ENCODE measurements at regions of chr6 and their contacts with region 1.

Region 1: DNA sequence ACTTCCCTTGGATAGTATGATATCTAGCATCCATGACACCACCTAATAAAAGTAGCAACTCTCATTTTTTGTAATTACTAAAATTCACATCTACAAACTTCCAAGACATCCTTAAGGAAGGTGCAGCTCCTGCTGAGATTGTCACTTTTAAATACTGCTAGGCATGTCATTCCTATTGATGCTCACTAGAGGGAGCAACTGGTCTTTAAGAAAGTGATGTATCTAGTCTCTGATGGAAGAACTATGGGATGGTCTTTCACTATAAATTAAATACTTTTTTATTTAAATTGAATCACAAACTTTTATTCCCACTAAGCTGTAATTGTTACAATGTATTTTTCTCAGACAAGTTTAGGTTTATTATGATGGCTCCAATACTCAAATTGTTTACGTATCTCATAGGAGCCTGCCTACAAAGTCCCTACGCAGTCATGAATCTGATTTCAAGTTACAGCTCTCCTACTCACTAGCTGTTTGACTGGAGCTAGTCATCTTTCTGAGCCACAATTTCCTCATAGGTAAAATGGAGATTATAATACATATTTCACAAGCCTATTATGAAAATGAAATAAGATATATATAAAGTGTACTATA is 8.1 kb upstream of the TSPYL1 start:
- DNase-seq: peak in 6 of 9 donors; percentile 19 to 51 (median 41)
- ATAC-seq: peak; percentile 91
- H3K4me3 ChIP-seq: no peak overlapping the region
- H3K4me3 Mint-ChIP-seq: no peak overlapping the region
- H3K27ac ChIP-seq: no peak overlapping the region
- H3K27ac Mint-ChIP-seq: no peak overlapping the region
- H3K4me1 ChIP-seq: no peaks in the 10 kb centered on the region
- H3K4me1 Mint-ChIP-seq: peaks cover 0 to 3% (median 0%) of the 10 kb centered on the region in 7 donors
- H3K27me3 ChIP-seq: peaks cover 0 to 2% of the 10 kb centered on the region in 2 donors
- H3K27me3 Mint-ChIP-seq: peaks cover 0 to 10% (median 0%) of the 10 kb centered on the region in 5 donors

Region 2: GRCh38 chr6:116217069-116217468 is 70.7 kb before region 1 on chr6:
- CTCF ChIA-PET with region 1: no interaction called
- POLR2A ChIA-PET with region 1: no interaction called
- intact Hi-C with region 1: loop called in 1 of 2 experiments (anchors 2 kb)
- DNase-seq: peak in 6 of 9 donors; percentile 10 to 55 (median 44)
- ATAC-seq: peak; percentile 86
- H3K4me3 ChIP-seq: no peak overlapping the region
- H3K4me3 Mint-ChIP-seq: no peak overlapping the region
- H3K27ac ChIP-seq: no peak overlapping the region
- H3K27ac Mint-ChIP-seq: peak overlapping the region in 5 of 9 donors; percentile 7 to 76 (median 44)
- H3K4me1 ChIP-seq: no peaks in the 10 kb centered on the region
- H3K4me1 Mint-ChIP-seq: peaks cover 0 to 12% (median 6%) of the 10 kb centered on the region in 7 donors
- H3K27me3 ChIP-seq: no peaks in the 10 kb centered on the region
- H3K27me3 Mint-ChIP-seq: no peaks in the 10 kb centered on the region

Region 3: GRCh38 chr6:116268589-116269293 is 19.0 kb before region 1 on chr6:
- CTCF ChIA-PET with region 1: interaction called, 35 read pairs
- POLR2A ChIA-PET with region 1: interaction called, 3 read pairs
- intact Hi-C with region 1: loop called in 1 of 2 experiments (anchors 1 kb)
- DNase-seq: peak in 7 of 9 donors; percentile 21 to 54 (median 49)
- ATAC-seq: peak; percentile 93
- H3K4me3 ChIP-seq: no peak overlapping the region
- H3K4me3 Mint-ChIP-seq: no peak overlapping the region
- H3K27ac ChIP-seq: peak overlapping the region; percentile 6
- H3K27ac Mint-ChIP-seq: peak overlapping the region in 7 of 9 donors; percentile 1 to 60 (median 23)
- H3K4me1 ChIP-seq: no peaks in the 10 kb centered on the region
- H3K4me1 Mint-ChIP-seq: peaks cover 8 to 56% (median 49%) of the 10 kb centered on the region in 7 donors
- H3K27me3 ChIP-seq: no peaks in the 10 kb centered on the region
- H3K27me3 Mint-ChIP-seq: no peaks in the 10 kb centered on the region

Region 4: DNA sequence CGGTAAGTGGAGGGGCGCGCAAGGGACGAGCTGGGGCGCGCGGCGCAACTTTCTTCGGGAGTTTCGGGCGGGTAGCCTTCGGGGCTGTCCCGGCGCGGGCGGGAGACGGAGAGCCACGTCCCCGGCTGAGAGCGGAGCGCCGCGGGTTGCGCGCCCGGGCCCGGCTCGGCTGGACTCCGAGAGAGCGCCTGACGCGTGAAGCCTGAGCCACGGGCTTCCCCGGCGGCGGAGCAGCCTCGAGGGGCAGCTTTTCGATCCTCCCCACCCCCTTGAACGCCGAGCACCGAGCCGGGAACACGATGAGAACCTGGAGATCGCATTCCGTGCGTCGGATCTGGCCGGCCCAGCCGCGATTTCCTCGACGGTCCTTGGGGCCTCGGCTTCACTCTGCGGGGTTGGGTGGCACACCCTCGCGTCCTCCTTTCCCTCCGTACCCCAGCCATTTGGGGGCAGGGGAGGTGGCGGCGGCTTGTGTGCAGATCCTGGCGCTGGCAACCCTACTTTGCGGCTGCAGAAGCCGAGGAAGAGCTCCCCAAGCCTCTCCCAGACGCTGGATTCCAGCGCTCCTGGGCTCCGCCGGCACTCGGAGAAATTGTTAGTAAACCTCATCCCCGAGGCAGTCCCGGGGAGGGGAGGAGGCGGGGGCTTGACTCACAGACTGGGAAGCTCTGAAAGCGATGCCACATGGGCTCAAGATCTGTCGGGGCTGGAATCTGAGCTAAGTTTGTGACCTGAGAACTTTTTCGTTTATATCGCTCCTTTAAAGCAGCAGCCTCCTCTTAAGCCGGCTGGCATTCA is 83.5 kb after region 1 on chr6:
- CTCF ChIA-PET with region 1: no interaction called
- POLR2A ChIA-PET with region 1: no interaction called
- intact Hi-C with region 1: loop called in 1 of 2 experiments (anchors 5 kb)
- DNase-seq: peak in 8 of 9 donors; percentile 1 to 49 (median 27)
- ATAC-seq: peak; percentile 59
- H3K4me3 ChIP-seq: peak overlapping the region; percentile 64
- H3K4me3 Mint-ChIP-seq: peak overlapping the region; percentile 76 to 93 (median 86)
- H3K27ac ChIP-seq: no peak overlapping the region
- H3K27ac Mint-ChIP-seq: no peak overlapping the region
- H3K4me1 ChIP-seq: peaks cover 9 to 10% of the 10 kb centered on the region in 2 donors
- H3K4me1 Mint-ChIP-seq: peaks cover 9 to 18% (median 11%) of the 10 kb centered on the region in 7 donors
- H3K27me3 ChIP-seq: no peaks in the 10 kb centered on the region
- H3K27me3 Mint-ChIP-seq: peaks cover 5 to 71% (median 23%) of the 10 kb centered on the region in 5 donors

Region 5: GRCh38 chr6:116444092-116444491 is 156.3 kb after region 1 on chr6:
- CTCF ChIA-PET with region 1: no interaction called
- POLR2A ChIA-PET with region 1: no interaction called
- intact Hi-C with region 1: loop called in 1 of 2 experiments (anchors 2 kb)
- DNase-seq: peak in 3 of 9 donors; percentile 7 to 27 (median 20)
- ATAC-seq: peak; percentile 76
- H3K4me3 ChIP-seq: no peak overlapping the region
- H3K4me3 Mint-ChIP-seq: peak overlapping the region in 1 of 10 donors; percentile 36
- H3K27ac ChIP-seq: no peak overlapping the region
- H3K27ac Mint-ChIP-seq: peak overlapping the region in 1 of 9 donors; percentile 25
- H3K4me1 ChIP-seq: peaks cover 0 to 4% of the 10 kb centered on the region in 2 donors
- H3K4me1 Mint-ChIP-seq: peaks cover 0 to 32% (median 0%) of the 10 kb centered on the region in 7 donors
- H3K27me3 ChIP-seq: no peaks in the 10 kb centered on the region
- H3K27me3 Mint-ChIP-seq: peaks cover 8 to 28% (median 20%) of the 10 kb centered on the region in 5 donors

Region 6: DNA sequence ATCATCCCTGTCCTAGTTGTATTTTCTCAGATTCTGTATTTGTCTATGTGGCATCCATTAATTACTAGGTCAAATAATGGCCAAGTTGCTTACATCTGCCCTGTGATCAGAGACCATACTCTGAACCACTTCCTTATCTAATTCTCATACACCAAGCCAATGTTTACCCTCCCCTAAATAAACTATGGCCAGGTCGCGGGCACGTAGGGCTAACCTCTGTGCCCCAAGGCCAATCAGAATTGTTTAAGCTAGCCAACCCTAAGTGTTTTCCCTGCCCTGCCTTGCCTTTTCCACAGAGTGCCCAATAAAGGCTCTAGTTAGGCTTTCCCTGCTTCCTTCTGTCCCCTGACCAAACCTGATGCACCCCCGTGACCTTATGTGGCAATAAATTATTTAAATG is 263.0 kb after region 1 on chr6:
- CTCF ChIA-PET with region 1: no interaction called
- POLR2A ChIA-PET with region 1: no interaction called
- intact Hi-C with region 1: no loop called
- DNase-seq: no peak
- ATAC-seq: no peak
- H3K4me3 ChIP-seq: no peak overlapping the region
- H3K4me3 Mint-ChIP-seq: no peak overlapping the region
- H3K27ac ChIP-seq: no peak overlapping the region
- H3K27ac Mint-ChIP-seq: no peak overlapping the region
- H3K4me1 ChIP-seq: no peaks in the 10 kb centered on the region
- H3K4me1 Mint-ChIP-seq: no peaks in the 10 kb centered on the region
- H3K27me3 ChIP-seq: peaks cover 0 to 3% of the 10 kb centered on the region in 2 donors
- H3K27me3 Mint-ChIP-seq: peaks cover 10 to 40% (median 20%) of the 10 kb centered on the region in 5 donors

Region 7: DNA sequence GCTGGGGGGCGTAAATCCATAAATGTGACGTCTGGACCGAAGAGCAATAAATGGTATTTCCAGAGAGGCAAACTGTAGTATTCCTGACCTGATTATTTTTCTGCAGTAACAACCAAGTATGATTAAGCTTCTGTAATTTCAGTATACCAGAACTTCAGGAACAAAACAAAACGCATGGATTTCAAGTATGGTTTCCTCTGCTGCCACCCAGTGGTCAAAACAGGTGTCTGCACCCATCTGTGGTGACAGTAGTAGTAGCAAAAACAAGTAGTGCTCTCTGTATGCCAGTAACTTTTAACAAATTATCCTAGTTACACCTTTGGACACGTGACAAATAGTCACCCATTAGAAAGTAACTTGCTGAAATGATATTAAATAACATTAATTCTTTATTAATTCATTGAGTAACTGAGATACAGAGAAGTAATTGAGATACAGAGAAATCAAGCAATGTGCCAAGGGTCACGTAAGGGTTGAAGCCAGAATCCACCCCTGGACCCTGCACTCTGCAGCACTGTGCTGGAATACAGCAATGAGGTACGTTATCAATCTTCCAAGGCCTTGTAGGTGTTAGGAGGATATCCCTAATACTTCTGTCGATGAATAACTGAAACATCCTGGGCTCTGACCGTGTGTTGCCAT is 273.7 kb after region 1 on chr6:
- CTCF ChIA-PET with region 1: interaction called, 4 read pairs
- POLR2A ChIA-PET with region 1: no interaction called
- intact Hi-C with region 1: loop called (anchors 1 kb)
- DNase-seq: peak; percentile 28 to 69 (median 57)
- ATAC-seq: peak; percentile 90
- H3K4me3 ChIP-seq: no peak overlapping the region
- H3K4me3 Mint-ChIP-seq: peak overlapping the region in 1 of 10 donors; percentile 40
- H3K27ac ChIP-seq: no peak overlapping the region
- H3K27ac Mint-ChIP-seq: no peak overlapping the region
- H3K4me1 ChIP-seq: no peaks in the 10 kb centered on the region
- H3K4me1 Mint-ChIP-seq: peaks cover 3 to 14% (median 10%) of the 10 kb centered on the region in 7 donors
- H3K27me3 ChIP-seq: no peaks in the 10 kb centered on the region
- H3K27me3 Mint-ChIP-seq: peaks cover 0 to 35% (median 18%) of the 10 kb centered on the region in 5 donors

Region 8: DNA sequence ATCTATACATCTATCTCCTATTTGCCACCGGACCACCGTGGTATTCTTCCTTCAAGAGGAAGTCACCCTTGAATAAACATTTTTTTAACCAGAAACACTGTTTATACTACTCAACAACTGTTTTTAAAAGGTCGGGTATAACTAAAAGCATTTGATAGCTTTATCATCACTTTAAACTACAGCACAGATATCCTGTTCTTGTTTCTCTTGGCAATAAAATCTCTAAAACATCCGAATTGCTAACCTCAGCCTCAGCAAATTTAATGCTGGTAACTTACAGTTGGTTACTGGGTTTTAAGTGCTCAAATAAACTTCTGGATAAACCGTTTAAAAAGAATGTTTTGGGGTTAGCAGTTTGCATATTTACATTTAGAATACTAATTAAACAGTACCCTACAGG is 360.4 kb after region 1 on chr6:
- CTCF ChIA-PET with region 1: no interaction called
- POLR2A ChIA-PET with region 1: no interaction called
- intact Hi-C with region 1: loop called (anchors 1 to 5 kb)
- DNase-seq: no peak
- ATAC-seq: no peak
- H3K4me3 ChIP-seq: no peak overlapping the region
- H3K4me3 Mint-ChIP-seq: no peak overlapping the region
- H3K27ac ChIP-seq: no peak overlapping the region
- H3K27ac Mint-ChIP-seq: peak overlapping the region in 1 of 9 donors; percentile 8
- H3K4me1 ChIP-seq: no peaks in the 10 kb centered on the region
- H3K4me1 Mint-ChIP-seq: peaks cover 0 to 13% (median 9%) of the 10 kb centered on the region in 7 donors
- H3K27me3 ChIP-seq: no peaks in the 10 kb centered on the region
- H3K27me3 Mint-ChIP-seq: no peaks in the 10 kb centered on the region